Activated CD8-positive, alpha-beta T cell treated with anti-CD3 and anti-CD28 coated beads for 36 hours (primary cell): ENCODE measurements at regions of chr10 and their contacts with region 1.

Region 1: DNA sequence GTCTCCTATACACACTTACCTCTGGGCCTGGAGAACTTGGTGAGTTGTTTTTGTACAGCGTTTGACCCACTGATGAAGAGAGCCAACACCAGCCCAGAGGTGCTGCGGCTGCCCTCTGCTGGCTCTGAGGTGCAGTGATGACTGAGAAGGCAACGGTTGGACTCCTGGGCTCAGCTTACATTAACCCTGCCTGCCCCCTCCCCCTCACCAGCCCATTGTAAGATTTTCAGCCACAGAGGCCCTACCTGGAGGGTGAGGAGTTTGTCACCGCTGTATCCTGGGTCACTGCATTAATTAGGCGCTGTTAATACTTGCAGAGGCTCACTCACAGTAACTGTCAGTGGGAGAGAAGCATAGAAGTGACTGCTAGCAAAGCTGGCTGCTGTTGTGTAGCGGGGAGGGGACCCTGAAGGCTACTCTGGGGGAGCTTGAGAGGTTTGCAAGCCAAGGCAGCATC is 19.0 kb upstream of the ANKRD2 start:
- DNase-seq: peak; percentile 76
- ATAC-seq: peak; percentile 99
- H3K4me3 Mint-ChIP-seq: no peak overlapping the region
- H3K27ac Mint-ChIP-seq: no peak overlapping the region
- H3K4me1 Mint-ChIP-seq: no peaks in the 10 kb centered on the region
- H3K27me3 Mint-ChIP-seq: no peaks in the 10 kb centered on the region
- CTCF ChIP-seq: peak; percentile 74

Region 2: DNA sequence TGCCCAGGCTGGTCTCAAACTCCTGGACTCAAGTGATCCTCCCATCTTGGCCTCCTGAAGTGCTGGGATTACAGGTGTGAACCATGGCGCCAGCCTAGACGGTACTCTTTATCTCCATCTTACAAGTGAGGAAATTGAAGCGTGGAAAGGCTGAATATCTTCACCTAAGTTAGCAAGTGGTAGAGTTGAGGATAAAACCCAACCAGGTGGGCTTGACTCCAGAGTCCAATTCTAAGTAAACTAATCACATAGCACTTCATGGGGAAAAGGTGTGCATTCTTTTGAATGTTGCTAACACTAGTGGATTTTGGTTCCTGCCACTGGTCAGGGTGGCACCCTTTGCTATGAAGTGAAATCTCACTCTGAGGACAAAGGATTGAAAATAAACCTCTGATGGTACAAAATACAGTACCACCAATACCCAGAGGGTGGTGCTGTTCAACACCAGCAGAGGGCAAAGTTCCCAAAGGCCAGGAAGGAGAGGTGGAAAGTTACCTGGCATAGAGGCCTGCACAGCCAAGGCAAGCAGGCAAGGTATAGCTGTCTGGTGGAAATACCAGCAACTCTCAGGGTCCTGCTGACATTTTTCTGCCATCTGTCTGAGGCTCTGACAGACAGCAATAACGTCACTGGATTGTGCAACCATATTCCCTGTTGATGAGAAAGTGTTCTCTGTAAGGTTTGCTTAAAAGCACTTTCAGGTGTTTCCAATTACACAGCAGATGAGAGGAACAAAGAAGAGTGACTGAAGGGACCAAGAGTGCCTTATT is 90.1 kb before region 1 on chr10:
- CTCF ChIA-PET with region 1: interaction called, 21 read pairs
- POLR2A ChIA-PET with region 1: no interaction called
- intact Hi-C with region 1: loop called (anchors 2 kb)
- DNase-seq: peak; percentile 40
- ATAC-seq: peak; percentile 80
- H3K4me3 Mint-ChIP-seq: no peak overlapping the region
- H3K27ac Mint-ChIP-seq: peak overlapping the region; percentile 55
- H3K4me1 Mint-ChIP-seq: no peaks in the 10 kb centered on the region
- H3K27me3 Mint-ChIP-seq: no peaks in the 10 kb centered on the region
- CTCF ChIP-seq: peak; percentile 89